K562 (cell line): ENCODE measurements at regions of chr21 and their contacts with region 1.

Region 1: GRCh38 chr21:33542640-33543504 is at the start of gene SON:
- DNase-seq: peak; percentile 98 to 100 (median 98)
- ATAC-seq: peak; percentile 93
- H3K4me3 ChIP-seq: peak within 1 kb of the TSS; percentile 71
- H3K27ac ChIP-seq: peak within 1 kb of the TSS; percentile 99
- H3K4me1 ChIP-seq: peaks cover 3 to 13% of the 10 kb centered on the region in 2 experiments; a peak in 3 of 5 replicates
- H3K27me3 ChIP-seq: no peaks in the 10 kb centered on the region
- CTCF ChIP-seq: no peak
- EP300 ChIP-seq: no peak; the same call in 1 of the 2 replicates
- POLR2A ChIP-seq: peak; percentile 97
- RAD21 ChIP-seq: no peak
- polyA plus RNA-seq, gene SON: 195 to 742 TPM

Region 2: GRCh38 chr21:33157303-33157702 is 385.6 kb before region 1 on chr21:
- CTCF ChIA-PET with region 1: no interaction called
- POLR2A ChIA-PET with region 1: no interaction called
- in situ Hi-C with region 1: no loop called
- intact Hi-C with region 1: no loop called
- DNase-seq: no peak
- ATAC-seq: no peak
- H3K4me3 ChIP-seq: no peak overlapping the region
- H3K27ac ChIP-seq: no peak overlapping the region
- H3K4me1 ChIP-seq: peaks cover 0 to 3% of the 10 kb centered on the region in 2 experiments; a peak in 1 of 5 replicates
- H3K27me3 ChIP-seq: peaks cover 12 to 27% of the 10 kb centered on the region in 2 experiments
- CTCF ChIP-seq: no peak
- EP300 ChIP-seq: no peak
- POLR2A ChIP-seq: no peak
- RAD21 ChIP-seq: no peak

Region 3: GRCh38 chr21:33350676-33351075 is 192.2 kb before region 1 on chr21:
- CTCF ChIA-PET with region 1: no interaction called
- POLR2A ChIA-PET with region 1: no interaction called
- in situ Hi-C with region 1: no loop called
- intact Hi-C with region 1: no loop called
- DNase-seq: no peak
- ATAC-seq: no peak
- H3K4me3 ChIP-seq: no peak overlapping the region
- H3K27ac ChIP-seq: no peak overlapping the region
- H3K4me1 ChIP-seq: no peaks in the 10 kb centered on the region
- H3K27me3 ChIP-seq: no peaks in the 10 kb centered on the region
- CTCF ChIP-seq: no peak
- EP300 ChIP-seq: no peak
- POLR2A ChIP-seq: no peak
- RAD21 ChIP-seq: no peak

Region 4: GRCh38 chr21:33403779-33404585 is 138.9 kb before region 1 on chr21:
- CTCF ChIA-PET with region 1: no interaction called
- POLR2A ChIA-PET with region 1: no interaction called
- in situ Hi-C with region 1: no loop called
- intact Hi-C with region 1: loop called (anchors 5 kb)
- DNase-seq: peak; percentile 65 to 71 (median 71)
- ATAC-seq: peak; percentile 83
- H3K4me3 ChIP-seq: peak overlapping the region; percentile 75
- H3K27ac ChIP-seq: peak overlapping the region; percentile 84
- H3K4me1 ChIP-seq: peaks cover 8 to 35% of the 10 kb centered on the region in 2 experiments; a peak in 4 of 5 replicates
- H3K27me3 ChIP-seq: no peaks in the 10 kb centered on the region
- CTCF ChIP-seq: no peak
- EP300 ChIP-seq: no peak
- POLR2A ChIP-seq: peak; percentile 64
- RAD21 ChIP-seq: no peak

Region 5: GRCh38 chr21:33514229-33514628 is 28.6 kb before region 1 on chr21:
- CTCF ChIA-PET with region 1: no interaction called
- POLR2A ChIA-PET with region 1: interaction called, 12 read pairs
- in situ Hi-C with region 1: no loop called
- intact Hi-C with region 1: no loop called
- DNase-seq: no peak
- ATAC-seq: no peak
- H3K4me3 ChIP-seq: no peak overlapping the region
- H3K27ac ChIP-seq: no peak overlapping the region
- H3K4me1 ChIP-seq: peaks cover 0 to 9% of the 10 kb centered on the region in 2 experiments; a peak in 3 of 5 replicates
- H3K27me3 ChIP-seq: no peaks in the 10 kb centered on the region
- CTCF ChIP-seq: no peak
- EP300 ChIP-seq: no peak
- POLR2A ChIP-seq: no peak
- RAD21 ChIP-seq: no peak

Region 6: GRCh38 chr21:33578959-33579542 is 36.2 kb after region 1 on chr21:
- CTCF ChIA-PET with region 1: no interaction called
- POLR2A ChIA-PET with region 1: interaction called, 15 read pairs
- in situ Hi-C with region 1: no loop called
- intact Hi-C with region 1: no loop called
- DNase-seq: no peak
- ATAC-seq: peak; percentile 17
- H3K4me3 ChIP-seq: no peak overlapping the region
- H3K27ac ChIP-seq: peak overlapping the region; percentile 62
- H3K4me1 ChIP-seq: no peaks in the 10 kb centered on the region; a peak in 1 of 5 replicates
- H3K27me3 ChIP-seq: no peaks in the 10 kb centered on the region
- CTCF ChIP-seq: no peak
- EP300 ChIP-seq: no peak
- POLR2A ChIP-seq: peak; percentile 56
- RAD21 ChIP-seq: no peak

Region 7: DNA sequence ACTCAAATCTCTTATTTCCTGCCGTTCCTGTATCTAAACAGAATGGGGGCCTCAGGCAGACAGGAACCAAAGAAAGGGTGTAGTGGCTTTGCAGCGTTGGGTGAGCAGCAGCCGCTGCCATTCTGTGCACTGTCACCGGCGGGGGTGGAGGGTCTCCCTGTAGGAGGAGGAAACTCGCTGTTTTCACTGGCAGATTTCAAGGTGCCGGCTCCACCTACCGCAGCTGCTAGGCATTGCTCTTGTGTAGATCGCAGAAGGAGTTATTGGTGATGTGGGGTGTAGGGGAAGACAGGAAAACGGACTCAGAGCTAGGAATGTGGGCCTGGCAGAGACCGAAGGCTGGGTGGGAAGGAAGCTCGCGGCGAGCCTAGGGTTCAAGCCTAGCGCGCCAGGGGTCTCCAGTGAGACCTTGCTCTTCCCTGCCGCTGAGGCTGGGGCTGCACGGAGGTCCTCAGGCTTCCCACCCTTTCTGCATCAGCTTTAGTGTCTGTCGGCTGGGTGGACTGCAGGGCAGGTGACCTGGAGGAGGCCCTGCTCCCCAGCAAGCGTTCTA is 351.9 kb after region 1 on chr21:
- CTCF ChIA-PET with region 1: no interaction called
- POLR2A ChIA-PET with region 1: no interaction called
- in situ Hi-C with region 1: no loop called
- intact Hi-C with region 1: loop called (anchors 5 kb)
- DNase-seq: peak; percentile 84 to 92 (median 86)
- ATAC-seq: peak; percentile 97
- H3K4me3 ChIP-seq: no peak overlapping the region
- H3K27ac ChIP-seq: no peak overlapping the region
- H3K4me1 ChIP-seq: peaks cover 2 to 12% of the 10 kb centered on the region in 2 experiments; a peak in 4 of 5 replicates
- H3K27me3 ChIP-seq: peaks cover 10 to 15% of the 10 kb centered on the region in 2 experiments; a peak in 4 of 5 replicates
- CTCF ChIP-seq: peak; percentile 88 to 92 (median 92)
- EP300 ChIP-seq: no peak
- POLR2A ChIP-seq: no peak
- RAD21 ChIP-seq: peak; percentile 86 to 92

Region 8: GRCh38 chr21:34367321-34367935 is 824.6 kb after region 1 on chr21:
- CTCF ChIA-PET with region 1: no interaction called
- POLR2A ChIA-PET with region 1: no interaction called
- in situ Hi-C with region 1: no loop called
- intact Hi-C with region 1: no loop called
- DNase-seq: peak in 2 of 4 experiments; percentile 62 to 77
- ATAC-seq: peak; percentile 95
- H3K4me3 ChIP-seq: no peak overlapping the region
- H3K27ac ChIP-seq: no peak overlapping the region
- H3K4me1 ChIP-seq: no peaks in the 10 kb centered on the region
- H3K27me3 ChIP-seq: peaks cover 5 to 7% of the 10 kb centered on the region in 2 experiments; a peak in 3 of 5 replicates
- CTCF ChIP-seq: peak; percentile 66 to 90 (median 78)
- EP300 ChIP-seq: no peak
- POLR2A ChIP-seq: no peak
- RAD21 ChIP-seq: peak; percentile 61 to 75